ENCODE measurements at regions of chr14 and their contacts with region 1.

Region 1: DNA sequence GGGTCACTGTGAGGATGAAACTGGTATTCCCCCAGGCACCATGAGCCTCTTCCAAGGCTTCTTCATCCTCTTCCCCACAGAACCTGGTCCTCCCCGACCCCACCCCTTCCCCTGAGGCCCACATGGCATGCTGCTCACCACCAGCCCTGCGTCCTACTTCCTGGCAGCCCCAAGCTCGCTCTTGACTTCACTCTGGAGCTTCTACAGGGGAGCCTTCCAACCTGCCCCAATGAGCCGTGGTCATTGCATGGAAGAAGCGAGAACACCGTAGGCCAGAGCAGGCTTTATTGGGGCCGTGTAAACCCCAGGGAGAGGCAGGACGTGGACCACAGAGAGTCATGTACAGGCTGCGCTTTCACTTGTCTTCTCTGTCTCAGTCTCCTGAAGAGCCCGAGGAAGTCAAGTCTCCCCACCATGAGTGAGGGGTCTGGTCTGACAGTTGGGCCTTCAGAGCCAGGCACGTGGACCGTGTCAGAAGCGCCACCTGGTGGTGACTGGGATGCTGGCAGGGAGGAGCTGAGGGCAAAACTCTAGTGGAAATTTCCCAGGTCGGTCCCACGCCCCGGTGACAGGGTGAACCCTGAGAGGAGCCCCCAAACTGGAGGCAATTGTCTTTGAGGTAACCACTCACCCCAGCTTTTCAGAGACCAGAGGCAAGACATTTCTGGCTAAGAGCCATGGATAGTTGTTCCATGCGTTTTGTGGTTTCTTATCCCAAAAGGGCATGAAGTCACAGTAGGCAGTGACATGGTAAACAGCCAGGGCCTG is 17.5 kb downstream of the RPS6KL1 start:
- DNase-seq: peak; percentile 68 to 87 (median 75)
- ATAC-seq: peak; percentile 23 to 56 (median 46)
- H3K4me3 ChIP-seq: no peak overlapping the region
- H3K27ac ChIP-seq: peak overlapping the region in 3 of 12 donors; percentile 24 to 34 (median 27)
- H3K4me1 ChIP-seq: peaks cover 11 to 53% (median 38%) of the 10 kb centered on the region in 12 donors
- H3K27me3 ChIP-seq: no peaks in the 10 kb centered on the region
- CTCF ChIP-seq: peak; percentile 84 to 95 (median 92)
- POLR2A ChIP-seq: peak in 1 of 2 donors; percentile 20

Region 2: DNA sequence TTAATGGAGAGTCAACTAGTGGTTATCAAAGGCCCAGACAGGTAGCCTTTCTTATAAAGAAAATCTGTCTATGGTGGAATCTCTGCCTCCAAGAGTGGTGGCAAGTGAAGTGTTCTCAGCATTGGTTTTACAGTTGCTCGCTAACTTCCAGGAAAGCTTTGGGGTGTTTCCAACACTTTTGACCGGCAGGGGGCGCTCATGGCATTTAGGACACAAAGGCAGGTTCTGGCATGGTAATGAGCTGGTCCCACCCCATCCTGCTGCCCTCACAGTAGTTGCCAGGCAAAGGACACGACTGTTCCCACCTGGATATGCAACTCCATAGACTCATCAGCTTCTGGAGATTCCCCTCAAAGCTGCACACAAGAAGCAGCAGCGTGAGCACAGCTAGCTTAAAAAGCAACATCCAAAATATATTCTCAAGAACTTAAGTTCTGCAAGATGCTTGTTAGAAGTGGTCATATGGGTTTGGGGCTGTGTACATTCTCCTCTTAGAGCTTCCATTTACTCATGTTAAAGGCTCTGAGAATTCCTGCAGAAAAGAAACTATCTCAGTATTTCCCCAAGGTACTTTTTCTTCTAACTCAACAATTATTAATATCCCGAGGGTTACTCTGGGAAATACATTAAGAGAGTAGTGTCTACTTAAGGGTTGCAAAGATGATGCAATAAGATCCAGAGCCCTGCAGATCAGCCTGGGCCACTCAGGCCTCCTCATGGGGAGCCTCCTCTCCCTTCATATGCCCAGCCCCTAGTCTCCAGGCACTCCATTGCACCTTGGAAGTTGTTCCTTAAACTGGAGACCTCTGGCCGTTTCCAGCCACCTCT is 44.4 kb before region 1 on chr14:
- intact Hi-C with region 1: loop called (anchors 1 to 5 kb)
- DNase-seq: peak; percentile 85 to 93 (median 91)
- ATAC-seq: peak; percentile 32 to 85 (median 83)
- H3K4me3 ChIP-seq: no peak overlapping the region
- H3K27ac ChIP-seq: no peak overlapping the region
- H3K4me1 ChIP-seq: peaks cover 0 to 20% (median 5%) of the 10 kb centered on the region in 12 donors
- H3K27me3 ChIP-seq: no peaks in the 10 kb centered on the region
- CTCF ChIP-seq: peak; percentile 80 to 98 (median 90)
- POLR2A ChIP-seq: no peak

Region 3: DNA sequence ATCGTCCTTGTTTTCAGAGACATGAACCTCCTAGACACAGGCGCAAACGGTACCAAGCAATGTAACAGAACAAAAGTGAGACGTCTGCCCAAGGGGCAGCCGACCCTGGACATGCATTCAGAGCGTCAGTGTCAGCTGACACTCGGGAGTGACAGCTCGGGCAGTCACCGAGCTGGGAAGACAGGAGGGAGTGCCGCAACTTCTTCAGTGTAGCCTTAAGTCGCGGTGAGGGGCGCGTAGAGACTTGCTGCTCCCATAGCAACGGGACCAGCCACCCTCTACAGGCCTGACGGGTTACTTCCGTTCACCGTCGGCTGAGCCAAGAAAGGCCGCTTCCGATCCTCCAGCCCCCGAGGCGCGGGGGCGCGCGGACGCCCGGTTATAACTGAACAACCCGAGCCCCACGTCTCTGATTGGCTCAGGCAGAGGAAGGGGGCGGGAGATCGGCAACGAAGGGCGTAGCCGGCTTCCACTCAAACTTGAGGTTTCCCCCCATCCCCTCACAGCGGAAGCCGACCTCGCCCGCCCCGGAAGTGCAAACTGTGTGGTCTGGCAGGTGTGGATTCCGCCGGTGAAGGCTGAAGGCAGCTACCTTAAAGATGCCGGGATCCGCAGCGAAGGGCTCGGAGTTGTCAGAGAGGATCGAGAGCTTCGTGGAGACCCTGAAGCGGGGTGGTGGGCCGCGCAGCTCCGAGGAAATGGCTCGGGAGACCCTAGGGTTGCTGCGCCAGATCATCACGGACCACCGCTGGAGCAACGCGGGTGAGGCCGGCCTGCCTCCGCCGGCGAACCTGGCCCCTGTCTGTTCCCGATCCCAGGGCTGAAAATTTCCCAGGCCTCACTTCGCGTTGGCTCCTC is 97.1 kb after region 1 on chr14 and contains the start of gene EIF2B2:
- intact Hi-C with region 1: no loop called
- DNase-seq: peak; percentile 98 to 99 (median 98)
- ATAC-seq: peak; percentile 100
- H3K4me3 ChIP-seq: peak within 1 kb of the TSS; percentile 61 to 99 (median 86)
- H3K27ac ChIP-seq: peak within 1 kb of the TSS; percentile 81 to 94 (median 89)
- H3K4me1 ChIP-seq: peaks cover 6 to 27% (median 14%) of the 10 kb centered on the region in 12 donors
- H3K27me3 ChIP-seq: no peaks in the 10 kb centered on the region
- CTCF ChIP-seq: peak in 5 of 12 donors; percentile 13 to 41 (median 14)
- POLR2A ChIP-seq: peak in 1 of 2 donors; percentile 71
- total RNA-seq, gene EIF2B2: 26.2 to 40.9 (median 30.3) TPM

Measured in heart left ventricle (tissue), 16 donors.